ENCODE measurements at regions of chr5 and their contacts with region 1.

Region 1: DNA sequence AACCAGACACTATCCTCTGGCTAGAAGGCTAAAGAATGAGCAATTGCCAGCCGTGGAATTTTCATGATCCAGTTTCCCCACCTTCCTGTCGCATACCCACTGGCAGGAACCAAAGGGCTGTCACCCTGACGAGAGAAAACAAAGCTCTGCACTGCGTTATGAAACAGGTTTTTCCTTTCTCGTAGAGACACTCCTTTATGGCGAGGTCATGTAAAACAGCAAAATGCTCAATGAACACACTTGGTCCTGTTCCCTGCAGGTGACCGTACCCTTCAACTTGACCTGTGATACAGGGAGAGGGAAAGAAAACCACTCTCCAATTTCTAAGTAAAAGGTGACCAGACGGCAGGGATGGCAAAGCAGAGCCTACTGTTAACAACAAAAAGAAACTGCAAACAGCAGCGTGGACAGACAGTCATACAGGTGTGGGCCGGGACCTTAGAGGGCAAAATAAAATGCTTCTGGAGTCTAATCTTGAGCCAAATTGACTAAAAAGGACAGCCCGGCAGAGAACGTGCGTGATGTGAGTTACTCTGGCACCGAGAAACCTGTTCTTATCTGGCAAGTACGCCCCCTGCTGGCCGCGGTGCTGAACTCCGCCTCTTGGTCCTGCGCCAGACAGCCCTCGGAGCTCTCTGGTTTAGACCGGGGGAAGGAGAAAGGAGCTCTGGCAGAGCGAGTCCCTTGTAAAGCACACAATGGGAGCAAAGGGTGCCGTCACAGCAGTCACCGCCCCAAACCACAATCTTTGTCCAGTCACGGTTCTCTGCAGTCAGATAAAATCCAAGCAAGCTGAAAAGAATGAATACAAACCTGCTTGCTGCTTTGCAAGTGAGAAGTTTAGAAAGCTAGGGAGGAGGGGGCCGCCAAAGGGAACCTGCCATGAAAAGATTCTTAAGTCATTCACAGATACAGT is 98.9 kb downstream of the EFNA5 start:
- DNase-seq: peak; percentile 75 to 87
- ATAC-seq: peak; percentile 93 to 97
- H3K4me3 ChIP-seq: peak overlapping the region; percentile 53 to 80 (median 61)
- H3K27ac ChIP-seq: peak overlapping the region; percentile 47 to 77 (median 66)
- H3K4me1 ChIP-seq: peaks cover 10 to 16% of the 10 kb centered on the region in 2 donors
- H3K27me3 ChIP-seq: no peaks in the 10 kb centered on the region
- CTCF ChIP-seq: peak; percentile 81 to 94 (median 89)
- POLR2A ChIP-seq: no peak

Region 2: GRCh38 chr5:107389130-107389774 is 182.6 kb before region 1 on chr5:
- in situ Hi-C with region 1: no loop called
- intact Hi-C with region 1: loop called (anchors 5 kb)
- DNase-seq: no peak
- ATAC-seq: peak; percentile 54 to 61
- H3K4me3 ChIP-seq: no peak overlapping the region
- H3K27ac ChIP-seq: peak overlapping the region in 1 of 4 donors; percentile 60
- H3K4me1 ChIP-seq: peaks cover 19 to 21% of the 10 kb centered on the region in 2 donors
- H3K27me3 ChIP-seq: no peaks in the 10 kb centered on the region
- CTCF ChIP-seq: no peak
- POLR2A ChIP-seq: no peak

Region 3: DNA sequence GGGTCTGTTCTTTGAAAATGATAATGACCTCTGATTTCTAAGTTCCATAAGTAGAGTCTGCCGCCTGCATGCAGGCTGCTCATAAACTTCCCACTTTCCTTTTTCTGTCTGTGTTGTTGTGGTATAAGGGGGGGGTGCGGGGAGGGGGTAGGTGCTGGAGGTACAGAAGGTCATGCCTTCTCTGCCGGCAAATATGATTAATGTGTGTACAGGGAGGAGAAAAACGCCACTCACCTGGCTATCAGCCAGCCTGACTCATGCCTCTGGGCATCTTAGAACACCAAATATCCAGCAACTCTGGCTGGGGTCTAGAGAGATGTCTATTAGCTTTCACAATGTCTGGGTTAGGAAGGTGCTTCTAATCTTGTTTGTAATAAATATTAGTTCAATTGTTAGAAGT is 29.5 kb before region 1 on chr5:
- in situ Hi-C with region 1: no loop called
- intact Hi-C with region 1: loop called (anchors 2 kb)
- DNase-seq: peak; percentile 54 to 77
- ATAC-seq: peak; percentile 80 to 89
- H3K4me3 ChIP-seq: peak overlapping the region in 2 of 4 donors; percentile 26 to 32
- H3K27ac ChIP-seq: peak overlapping the region; percentile 70 to 72 (median 70)
- H3K4me1 ChIP-seq: peaks cover 9 to 18% of the 10 kb centered on the region in 2 donors
- H3K27me3 ChIP-seq: no peaks in the 10 kb centered on the region
- CTCF ChIP-seq: no peak
- POLR2A ChIP-seq: no peak

Region 4: GRCh38 chr5:107557051-107557658 is 14.7 kb before region 1 on chr5:
- in situ Hi-C with region 1: no loop called
- intact Hi-C with region 1: no loop called
- DNase-seq: peak in 1 of 2 donors; percentile 33
- ATAC-seq: peak; percentile 45 to 76
- H3K4me3 ChIP-seq: no peak overlapping the region
- H3K27ac ChIP-seq: peak overlapping the region in 2 of 4 donors; percentile 3 to 7
- H3K4me1 ChIP-seq: peaks cover 0 to 10% of the 10 kb centered on the region in 2 donors
- H3K27me3 ChIP-seq: no peaks in the 10 kb centered on the region
- CTCF ChIP-seq: no peak
- POLR2A ChIP-seq: no peak

Region 5: GRCh38 chr5:107618242-107618641 is 46.4 kb after region 1 on chr5:
- in situ Hi-C with region 1: no loop called
- intact Hi-C with region 1: no loop called
- DNase-seq: no peak
- ATAC-seq: no peak
- H3K4me3 ChIP-seq: no peak overlapping the region
- H3K27ac ChIP-seq: no peak overlapping the region
- H3K4me1 ChIP-seq: no peaks in the 10 kb centered on the region
- H3K27me3 ChIP-seq: no peaks in the 10 kb centered on the region
- CTCF ChIP-seq: no peak
- POLR2A ChIP-seq: no peak